IMR-90 (cell line): ENCODE measurements at regions of chr6 and their contacts with region 1.

Region 1: DNA sequence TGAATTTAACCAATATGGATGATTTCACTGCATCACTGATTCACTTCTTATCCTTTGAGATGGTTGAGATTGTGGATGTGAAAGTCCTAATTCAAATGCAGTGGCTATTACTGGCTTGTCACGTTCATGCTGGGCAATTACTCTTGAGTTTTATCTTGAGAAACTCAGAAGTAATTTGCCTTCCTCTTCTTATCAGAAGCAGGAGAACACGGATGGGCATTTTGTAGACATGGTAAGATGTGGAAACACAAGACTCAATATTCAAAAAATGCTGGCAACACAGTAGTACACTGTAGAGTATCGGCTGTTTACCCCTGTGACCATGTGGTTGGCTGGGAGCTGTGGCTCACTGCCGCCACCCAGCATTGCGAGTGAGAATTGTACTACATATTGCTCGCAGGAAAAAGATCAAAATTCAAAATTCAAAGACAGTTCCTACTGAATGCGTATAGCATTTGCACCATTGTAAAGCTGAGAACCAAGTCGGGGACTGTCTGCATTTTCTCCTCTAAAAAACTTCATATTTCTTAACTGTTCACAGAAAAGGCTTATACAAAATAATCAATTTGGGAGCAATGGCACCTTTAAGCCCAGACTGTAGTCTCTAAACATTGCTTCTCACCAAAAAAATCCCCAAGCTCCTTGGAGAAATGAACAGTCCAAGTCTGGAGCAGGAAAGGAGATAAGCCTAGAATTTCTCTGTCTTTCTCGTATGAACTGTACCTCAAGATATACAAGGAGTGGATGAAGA is 61.9 kb upstream of the ELOVL5 start:
- DNase-seq: peak; percentile 33
- ATAC-seq: peak; percentile 91
- H3K4me3 ChIP-seq: no peak overlapping the region
- H3K27ac ChIP-seq: no peak overlapping the region
- H3K4me1 ChIP-seq: no peaks in the 10 kb centered on the region
- H3K27me3 ChIP-seq: peaks cover 32% of the 10 kb centered on the region
- CTCF ChIP-seq: peak; percentile 62
- POLR2A ChIP-seq: no peak
- RAD21 ChIP-seq: peak; percentile 72

Region 2: DNA sequence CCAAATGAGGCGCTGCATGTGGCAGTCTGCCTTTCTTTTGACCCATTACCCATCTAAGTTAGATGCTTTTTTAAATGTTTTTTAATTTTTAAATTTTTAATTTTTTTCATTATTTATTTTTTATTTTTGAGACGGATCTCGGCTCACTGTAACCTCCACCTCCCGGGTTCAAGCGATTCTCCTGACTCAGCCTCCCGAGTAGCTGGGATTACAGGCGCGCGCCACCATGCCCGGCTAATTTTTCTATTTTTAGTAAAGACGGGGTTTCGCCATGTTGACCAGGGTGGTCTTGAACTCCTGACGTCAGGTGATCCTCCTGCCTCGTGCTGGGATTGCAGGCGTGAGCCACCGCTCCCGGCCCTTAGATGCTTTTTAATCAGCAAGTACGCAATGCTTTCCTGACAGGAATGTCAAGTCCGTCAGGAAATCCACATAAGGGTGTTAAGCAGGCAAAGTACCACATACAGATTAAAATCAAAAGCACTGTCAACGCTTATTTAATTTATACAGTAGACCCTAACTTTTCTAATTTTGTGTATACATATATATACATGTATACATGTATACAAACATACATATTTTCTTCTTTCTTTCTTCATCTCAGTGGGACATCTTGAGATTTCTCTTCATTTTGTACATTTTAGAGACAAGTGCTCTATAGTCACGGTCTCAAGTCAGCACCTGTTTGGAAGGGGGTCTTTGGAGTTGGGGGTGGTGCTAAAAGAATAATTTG is 414.6 kb before region 1 on chr6:
- CTCF ChIA-PET with region 1: no interaction called
- POLR2A ChIA-PET with region 1: no interaction called
- dilution Hi-C with region 1: no loop called
- in situ Hi-C with region 1: no loop called
- intact Hi-C with region 1: no loop called
- DNase-seq: peak; percentile 91
- ATAC-seq: no peak
- H3K4me3 ChIP-seq: peak overlapping the region; percentile 4; the same call in 1 of the 2 replicates
- H3K27ac ChIP-seq: no peak overlapping the region
- H3K4me1 ChIP-seq: peaks cover 3% of the 10 kb centered on the region; the same call in 1 of the 2 replicates
- H3K27me3 ChIP-seq: no peaks in the 10 kb centered on the region
- CTCF ChIP-seq: no peak
- POLR2A ChIP-seq: no peak
- RAD21 ChIP-seq: no peak

Region 3: DNA sequence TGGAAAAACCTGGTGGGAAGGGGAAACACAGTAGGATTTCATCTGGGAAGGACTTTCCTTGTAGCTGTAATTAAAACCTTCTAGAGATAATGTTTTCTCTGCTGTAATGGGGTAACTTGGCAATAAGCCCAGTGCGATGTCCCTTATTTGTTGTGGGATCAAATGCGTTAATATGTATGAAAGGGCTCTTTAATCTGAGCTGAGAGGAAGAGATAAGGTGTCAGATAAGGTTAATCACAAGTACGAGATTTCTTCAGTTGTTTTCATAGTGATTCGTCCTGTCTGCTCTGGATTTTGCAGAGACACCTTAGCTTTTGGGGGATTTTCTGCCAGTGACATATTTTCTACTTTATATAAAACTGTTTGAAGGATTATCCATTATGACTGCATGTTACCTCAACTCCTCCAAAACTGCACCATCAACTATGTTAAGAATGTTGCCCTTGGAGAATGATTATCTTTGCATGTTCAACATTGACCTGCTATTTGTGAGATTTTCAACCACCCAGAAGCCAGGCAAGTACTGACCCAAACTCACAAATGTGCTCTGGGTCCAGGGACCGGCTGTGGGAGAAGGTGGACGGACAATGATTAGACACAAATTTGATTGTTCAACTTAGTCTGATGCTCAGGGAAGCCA is 40.7 kb before region 1 on chr6:
- CTCF ChIA-PET with region 1: no interaction called
- POLR2A ChIA-PET with region 1: no interaction called
- dilution Hi-C with region 1: no loop called
- in situ Hi-C with region 1: no loop called
- intact Hi-C with region 1: loop called (anchors 5 kb)
- DNase-seq: no peak
- ATAC-seq: no peak
- H3K4me3 ChIP-seq: no peak overlapping the region
- H3K27ac ChIP-seq: no peak overlapping the region
- H3K4me1 ChIP-seq: no peaks in the 10 kb centered on the region
- H3K27me3 ChIP-seq: peaks cover 10% of the 10 kb centered on the region
- CTCF ChIP-seq: no peak
- POLR2A ChIP-seq: no peak
- RAD21 ChIP-seq: no peak